Activated CD8-positive, alpha-beta memory T cell treated with anti-CD3 and anti-CD28 coated beads, Interleukin-2, amount 10 ng/mL, durations not matched to agents 7 days and 5 days (primary cell): ENCODE measurements at regions of chr5 and their contacts with region 1.

Region 1: DNA sequence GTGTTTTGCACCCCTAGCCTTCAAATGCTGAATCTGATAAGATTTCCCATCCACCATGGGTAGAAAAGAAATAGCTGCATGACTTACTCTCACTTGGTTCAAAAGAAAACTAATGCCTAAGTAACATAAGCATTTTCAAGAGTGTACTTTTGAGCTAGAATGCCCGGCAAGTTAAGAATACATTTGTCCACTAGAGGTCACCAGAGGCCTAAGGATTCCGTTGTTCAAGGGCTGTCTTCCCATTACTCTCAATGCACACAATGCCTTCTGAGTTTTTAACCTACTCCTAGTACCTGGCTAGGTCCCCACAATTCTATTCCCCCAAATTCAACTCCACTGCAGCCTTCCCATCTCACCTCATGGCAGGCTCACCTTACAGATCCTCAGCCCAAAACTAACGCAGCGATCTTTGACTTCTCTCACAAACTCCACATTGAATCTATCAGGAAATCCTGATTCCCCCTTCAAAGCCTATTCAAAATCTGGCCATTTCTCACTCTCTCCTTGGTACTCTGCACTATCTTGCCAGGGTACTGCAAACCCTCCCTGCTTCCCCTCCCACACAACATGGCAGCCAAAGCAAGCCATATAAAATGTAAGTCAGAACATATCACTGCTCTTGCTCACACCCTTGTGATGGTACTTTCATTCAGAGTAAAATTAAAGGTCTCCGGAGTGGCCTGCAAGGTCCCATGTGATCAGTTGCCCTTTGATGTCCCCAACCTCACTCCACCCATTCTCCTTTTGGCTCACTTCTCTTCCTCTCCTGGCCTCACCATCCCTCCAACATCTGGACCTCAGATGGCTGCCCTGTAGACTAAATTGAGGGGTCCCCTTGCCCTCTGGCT is 13.4 kb downstream of the OXCT1 start:
- DNase-seq: peak; percentile 70
- ATAC-seq: peak; percentile 85
- H3K4me3 Mint-ChIP-seq: no peak overlapping the region
- H3K27ac Mint-ChIP-seq: no peak overlapping the region
- H3K4me1 Mint-ChIP-seq: peaks cover 31% of the 10 kb centered on the region
- H3K27me3 Mint-ChIP-seq: no peaks in the 10 kb centered on the region

Region 2: DNA sequence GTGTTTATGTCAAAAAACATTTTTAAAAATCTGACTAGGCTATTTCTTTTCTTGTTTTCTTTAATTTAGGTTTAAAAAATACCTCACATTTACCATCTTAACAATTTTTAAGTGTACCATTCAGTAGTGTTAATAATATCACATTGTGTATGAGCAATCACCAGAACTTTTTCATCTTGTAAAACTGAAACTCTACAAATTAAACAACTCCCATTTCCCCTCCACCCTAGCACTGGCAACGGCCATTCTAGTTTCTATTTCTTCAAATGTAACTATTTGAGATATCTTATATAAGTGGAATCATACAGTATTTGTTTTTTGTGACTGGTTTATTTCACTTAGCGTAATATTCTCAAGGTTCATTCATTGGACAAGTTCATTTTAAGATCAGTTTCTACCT is 374.2 kb before region 1 on chr5:
- CTCF ChIA-PET with region 1: no interaction called
- DNase-seq: no peak
- ATAC-seq: no peak
- H3K4me3 Mint-ChIP-seq: no peak overlapping the region
- H3K27ac Mint-ChIP-seq: peak overlapping the region; percentile 59
- H3K4me1 Mint-ChIP-seq: peaks cover 4% of the 10 kb centered on the region
- H3K27me3 Mint-ChIP-seq: no peaks in the 10 kb centered on the region

Region 3: DNA sequence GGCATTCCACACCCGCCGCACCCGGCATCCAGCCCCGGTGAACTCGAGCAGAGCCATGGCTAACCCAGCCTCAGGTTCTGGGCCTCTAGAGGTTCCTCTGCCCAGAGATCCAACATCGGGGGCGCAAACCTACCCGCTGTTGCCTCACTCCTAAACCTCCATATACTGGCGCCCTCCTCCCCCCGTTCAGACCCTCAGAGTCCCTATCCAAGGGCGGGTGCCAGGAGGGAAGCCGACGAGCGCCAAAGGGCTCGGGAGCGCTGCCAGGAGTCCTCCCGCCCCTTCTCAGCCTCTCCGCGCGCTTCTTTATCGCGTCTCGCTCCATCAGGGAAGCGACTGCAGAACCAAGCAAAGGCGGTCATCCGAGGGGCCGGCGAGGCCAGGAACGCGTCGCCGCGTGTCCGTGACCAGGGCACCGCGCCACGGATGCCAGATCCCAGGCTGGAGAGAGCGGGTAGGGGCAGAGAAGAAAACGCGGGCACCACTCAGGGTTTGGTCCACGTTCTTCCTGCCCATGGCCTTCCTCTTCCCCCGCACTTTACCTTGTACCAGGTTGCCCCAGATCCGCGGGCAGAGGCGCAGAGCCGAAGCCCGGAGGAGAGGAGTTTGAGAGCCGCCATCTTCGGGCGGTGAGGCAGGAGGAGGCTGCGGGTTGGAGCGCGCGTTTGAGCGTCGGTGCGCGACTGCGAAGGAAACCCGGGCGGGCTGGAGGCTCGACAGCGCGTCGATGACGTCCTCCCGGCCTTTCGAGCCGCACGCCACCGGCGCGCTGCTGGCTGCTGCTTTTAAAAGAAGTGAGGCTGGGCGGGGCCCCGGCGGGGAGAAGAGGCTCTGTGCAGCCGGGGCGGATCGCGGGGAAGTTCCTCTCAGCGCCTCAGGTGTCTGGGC is 13.1 kb after region 1 on chr5 and contains the start of gene OXCT1:
- CTCF ChIA-PET with region 1: interaction called, 10 read pairs
- DNase-seq: peak; percentile 95
- ATAC-seq: peak; percentile 94
- H3K4me3 Mint-ChIP-seq: peak within 1 kb of the TSS; percentile 89
- H3K27ac Mint-ChIP-seq: peak within 1 kb of the TSS; percentile 89
- H3K4me1 Mint-ChIP-seq: peaks cover 60% of the 10 kb centered on the region
- H3K27me3 Mint-ChIP-seq: no peaks in the 10 kb centered on the region
- total RNA-seq, gene OXCT1: 74.9 to 81.8 TPM

Region 4: DNA sequence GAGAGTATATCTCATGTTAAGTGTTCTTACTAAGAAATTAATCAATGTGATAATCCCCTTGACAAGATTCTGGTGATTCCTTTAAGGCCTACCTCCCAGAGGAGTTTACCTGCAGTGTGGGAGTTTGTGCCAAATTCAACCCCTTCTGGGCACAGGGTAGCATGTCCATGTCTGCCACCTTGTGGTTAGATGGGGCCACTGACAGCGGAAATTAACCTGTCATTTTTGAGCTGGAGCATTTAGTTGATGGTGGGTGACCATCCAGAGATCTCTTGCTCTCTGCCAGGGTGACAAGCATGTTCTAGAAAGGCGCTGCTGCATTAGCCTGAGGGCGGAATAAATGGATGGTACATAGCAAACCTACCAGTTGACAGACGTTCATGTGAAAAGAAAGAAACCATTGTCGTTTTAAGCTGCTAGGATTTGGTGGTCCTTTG is 200.4 kb after region 1 on chr5:
- CTCF ChIA-PET with region 1: interaction called, 84 read pairs
- DNase-seq: peak; percentile 67
- ATAC-seq: peak; percentile 80
- H3K4me3 Mint-ChIP-seq: no peak overlapping the region
- H3K27ac Mint-ChIP-seq: no peak overlapping the region
- H3K4me1 Mint-ChIP-seq: peaks cover 3% of the 10 kb centered on the region
- H3K27me3 Mint-ChIP-seq: peaks cover 9% of the 10 kb centered on the region